Heart right ventricle (tissue), 16 donors: ENCODE measurements at regions of chr12 and their contacts with region 1.

Region 1: GRCh38 chr12:21773263-21773741 is 1.2 kb downstream of the KCNJ8 start:
- DNase-seq: peak; percentile 67 to 68
- ATAC-seq: peak; percentile 16 to 55 (median 44)
- H3K4me3 ChIP-seq: peak overlapping the region; percentile 30 to 78 (median 70)
- H3K27ac ChIP-seq: peak overlapping the region; percentile 82 to 97 (median 91)
- H3K4me1 ChIP-seq: peaks cover 0 to 38% (median 6%) of the 10 kb centered on the region in 9 donors
- H3K27me3 ChIP-seq: peaks cover 0 to 51% (median 0%) of the 10 kb centered on the region in 7 donors
- CTCF ChIP-seq: peak in 8 of 9 donors; percentile 13 to 62 (median 44)

Region 2: GRCh38 chr12:21580748-21581516 is 192.4 kb before region 1 on chr12:
- intact Hi-C with region 1: no loop called
- DNase-seq: no peak
- ATAC-seq: no peak
- H3K4me3 ChIP-seq: no peak overlapping the region
- H3K27ac ChIP-seq: no peak overlapping the region
- H3K4me1 ChIP-seq: no peaks in the 10 kb centered on the region
- H3K27me3 ChIP-seq: no peaks in the 10 kb centered on the region
- CTCF ChIP-seq: no peak

Region 3: DNA sequence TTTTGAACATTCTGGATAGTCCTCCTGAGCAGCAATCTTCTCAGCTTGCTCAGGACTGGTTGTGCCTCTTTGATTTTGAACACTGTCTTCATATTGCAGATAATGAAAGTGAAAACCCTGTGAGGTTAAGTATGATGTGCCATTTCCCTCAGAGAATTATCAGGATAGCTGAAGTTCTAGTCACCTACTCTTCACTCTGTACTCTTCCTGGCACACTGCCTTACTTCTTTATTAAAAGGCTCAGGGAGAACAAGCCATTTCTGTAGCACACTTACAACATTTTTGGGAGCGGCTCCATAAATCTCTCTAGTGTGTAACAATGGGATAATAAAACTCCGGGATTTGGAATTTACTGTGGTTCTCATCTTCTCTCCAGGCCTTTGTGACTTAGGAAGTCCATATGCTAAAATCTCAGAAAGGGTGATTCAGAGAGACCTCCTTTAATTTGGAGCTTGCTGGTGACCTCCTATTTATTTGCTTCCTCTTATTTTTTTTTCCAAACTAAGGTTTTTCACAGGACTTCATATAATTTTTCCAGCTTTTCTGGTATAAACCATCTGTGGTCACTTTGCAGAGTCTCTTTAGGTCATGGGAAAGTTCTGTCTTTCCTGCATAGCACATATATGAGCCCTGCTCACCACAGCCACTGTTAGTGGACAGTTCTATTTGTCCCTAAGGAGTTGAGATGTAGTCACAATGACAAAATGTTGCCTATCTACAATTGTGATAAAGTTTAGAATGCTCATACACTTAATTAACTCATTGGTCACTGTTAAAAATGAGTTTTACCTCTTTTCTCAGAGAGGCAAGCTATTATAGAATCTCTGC is 62.1 kb before region 1 on chr12:
- intact Hi-C with region 1: loop called in 3 of 10 experiments (anchors 5 to 10 kb)
- DNase-seq: no peak
- ATAC-seq: peak in 7 of 8 donors; percentile 46 to 92 (median 59)
- H3K4me3 ChIP-seq: no peak overlapping the region
- H3K27ac ChIP-seq: peak overlapping the region in 9 of 10 donors; percentile 8 to 73 (median 52)
- H3K4me1 ChIP-seq: peaks cover 0 to 19% (median 15%) of the 10 kb centered on the region in 9 donors
- H3K27me3 ChIP-seq: no peaks in the 10 kb centered on the region
- CTCF ChIP-seq: no peak

Region 4: DNA sequence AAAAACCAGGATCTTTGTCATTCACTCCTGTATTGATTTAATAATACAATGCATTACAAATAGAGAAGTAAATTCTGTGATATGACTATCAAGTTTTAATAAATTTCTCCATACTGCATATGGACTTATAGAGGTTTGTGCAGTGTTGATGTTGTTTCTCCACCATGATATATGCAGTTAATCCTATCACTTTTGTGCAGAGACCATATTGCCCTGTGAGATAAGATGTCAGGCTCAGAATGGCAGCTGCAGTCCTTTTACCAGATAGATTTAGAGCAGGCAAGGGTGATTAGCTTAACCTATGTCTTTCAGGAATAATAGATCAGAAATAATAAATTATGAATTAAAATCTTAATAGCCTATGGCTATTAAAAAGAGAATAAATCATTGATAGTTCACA is 39.8 kb after region 1 on chr12:
- intact Hi-C with region 1: loop called in 3 of 10 experiments (anchors 5 kb)
- DNase-seq: no peak
- ATAC-seq: no peak
- H3K4me3 ChIP-seq: no peak overlapping the region
- H3K27ac ChIP-seq: peak overlapping the region in 2 of 10 donors; percentile 15 to 50
- H3K4me1 ChIP-seq: peaks cover 0 to 20% (median 4%) of the 10 kb centered on the region in 9 donors
- H3K27me3 ChIP-seq: no peaks in the 10 kb centered on the region
- CTCF ChIP-seq: no peak

Region 5: DNA sequence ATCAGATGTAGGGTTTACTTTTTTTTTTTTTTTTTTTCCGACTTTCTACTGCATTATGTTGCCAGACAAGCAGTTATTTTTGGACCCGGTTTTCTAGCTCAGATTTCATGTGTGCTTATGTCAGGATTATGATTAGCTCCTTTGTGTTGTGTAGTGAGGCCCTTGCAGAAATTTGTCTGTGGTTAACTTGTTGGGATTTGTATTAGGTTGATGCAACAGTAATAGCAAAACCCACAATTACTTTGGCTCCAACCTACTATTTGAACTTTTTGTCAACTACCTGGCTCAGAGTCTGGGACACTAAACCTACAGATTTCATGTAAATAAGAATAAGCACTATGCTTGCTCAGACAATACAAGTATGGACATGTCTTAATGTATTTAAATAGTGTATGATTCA is 45.3 kb after region 1 on chr12:
- intact Hi-C with region 1: loop called in 3 of 10 experiments (anchors 5 kb)
- DNase-seq: no peak
- ATAC-seq: peak in 5 of 8 donors; percentile 40 to 67 (median 48)
- H3K4me3 ChIP-seq: no peak overlapping the region
- H3K27ac ChIP-seq: peak overlapping the region in 5 of 10 donors; percentile 6 to 63 (median 55)
- H3K4me1 ChIP-seq: peaks cover 0 to 54% (median 12%) of the 10 kb centered on the region in 9 donors
- H3K27me3 ChIP-seq: no peaks in the 10 kb centered on the region
- CTCF ChIP-seq: no peak

Region 6: DNA sequence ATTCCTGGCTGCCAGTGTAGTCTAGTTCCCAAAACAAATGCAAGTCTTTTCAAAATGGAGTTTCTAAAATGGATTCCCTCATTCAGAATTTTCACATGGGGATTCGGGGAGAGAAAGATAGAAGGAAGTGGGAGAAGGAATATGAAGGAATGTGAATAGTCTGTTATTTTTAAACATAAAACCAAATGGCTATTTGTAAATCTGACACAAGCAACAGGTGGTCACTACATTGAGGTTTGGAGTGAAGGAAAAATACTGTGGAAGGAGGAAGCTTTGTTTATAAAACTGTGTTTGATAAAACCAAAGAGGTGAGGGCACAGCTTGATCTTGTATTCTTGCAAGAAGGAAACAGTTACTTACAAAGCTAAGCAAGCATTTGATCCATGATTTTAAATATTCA is 66.5 kb after region 1 on chr12:
- intact Hi-C with region 1: loop called in 1 of 10 experiments (anchors 5 kb)
- DNase-seq: no peak
- ATAC-seq: no peak
- H3K4me3 ChIP-seq: no peak overlapping the region
- H3K27ac ChIP-seq: no peak overlapping the region
- H3K4me1 ChIP-seq: no peaks in the 10 kb centered on the region
- H3K27me3 ChIP-seq: no peaks in the 10 kb centered on the region
- CTCF ChIP-seq: no peak

Region 7: DNA sequence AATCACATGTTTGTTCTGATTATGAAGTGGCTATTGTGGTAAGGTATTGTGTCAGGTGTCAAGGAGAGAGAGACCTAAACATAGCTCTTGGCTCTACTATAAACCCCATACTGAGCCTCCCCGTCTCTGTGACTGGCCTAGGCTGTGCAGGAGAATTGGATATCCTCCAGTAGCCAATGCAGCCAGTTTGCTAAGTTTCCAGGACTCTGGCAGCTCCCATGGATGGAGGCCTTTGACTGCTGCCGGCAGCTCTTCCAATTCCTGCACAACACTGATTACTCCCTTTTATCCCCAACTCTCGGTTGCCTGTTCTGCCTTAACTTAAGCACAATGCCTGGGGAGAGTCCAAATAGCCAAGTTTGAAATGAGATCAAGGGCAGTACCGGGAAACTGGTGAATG is 108.7 kb after region 1 on chr12:
- intact Hi-C with region 1: loop called in 2 of 10 experiments (anchors 2 to 5 kb)
- DNase-seq: peak; percentile 20 to 67
- ATAC-seq: peak; percentile 74 to 97 (median 90)
- H3K4me3 ChIP-seq: no peak overlapping the region
- H3K27ac ChIP-seq: peak overlapping the region; percentile 59 to 83 (median 77)
- H3K4me1 ChIP-seq: peaks cover 5 to 64% (median 37%) of the 10 kb centered on the region in 9 donors
- H3K27me3 ChIP-seq: no peaks in the 10 kb centered on the region
- CTCF ChIP-seq: no peak

Region 8: GRCh38 chr12:21940549-21941505 is 167.5 kb after region 1 on chr12 and contains the start of gene ABCC9:
- intact Hi-C with region 1: loop called in 7 of 10 experiments (anchors 2 to 5 kb)
- DNase-seq: peak; percentile 64 to 67
- ATAC-seq: peak; percentile 73 to 88 (median 86)
- H3K4me3 ChIP-seq: peak within 1 kb of the TSS; percentile 23 to 65 (median 58)
- H3K27ac ChIP-seq: peak within 1 kb of the TSS; percentile 79 to 96 (median 92)
- H3K4me1 ChIP-seq: peaks cover 0 to 31% (median 5%) of the 10 kb centered on the region in 9 donors
- H3K27me3 ChIP-seq: peaks cover 0 to 46% (median 5%) of the 10 kb centered on the region in 7 donors
- CTCF ChIP-seq: peak in 3 of 9 donors; percentile 19 to 24 (median 20)
- total RNA-seq, gene ABCC9: 64.3 to 128 (median 104) TPM